CD14-positive monocyte (primary cell): ENCODE measurements at regions of chr11 and their contacts with region 1.

Region 1: GRCh38 chr11:112795142-112795815 is 165.9 kb upstream of the NCAM1 start:
- DNase-seq: peak; percentile 5 to 35 (median 16)
- H3K4me3 ChIP-seq: no peak overlapping the region
- H3K4me3 Mint-ChIP-seq: no peak overlapping the region
- H3K27ac ChIP-seq: no peak overlapping the region
- H3K27ac Mint-ChIP-seq: peak overlapping the region in 1 of 7 donors; percentile 58
- H3K4me1 ChIP-seq: no peaks in the 10 kb centered on the region
- H3K4me1 Mint-ChIP-seq: peaks cover 8% of the 10 kb centered on the region
- H3K27me3 ChIP-seq: no peaks in the 10 kb centered on the region
- H3K27me3 Mint-ChIP-seq: no peaks in the 10 kb centered on the region
- CTCF ChIP-seq: peak; percentile 46

Region 2: DNA sequence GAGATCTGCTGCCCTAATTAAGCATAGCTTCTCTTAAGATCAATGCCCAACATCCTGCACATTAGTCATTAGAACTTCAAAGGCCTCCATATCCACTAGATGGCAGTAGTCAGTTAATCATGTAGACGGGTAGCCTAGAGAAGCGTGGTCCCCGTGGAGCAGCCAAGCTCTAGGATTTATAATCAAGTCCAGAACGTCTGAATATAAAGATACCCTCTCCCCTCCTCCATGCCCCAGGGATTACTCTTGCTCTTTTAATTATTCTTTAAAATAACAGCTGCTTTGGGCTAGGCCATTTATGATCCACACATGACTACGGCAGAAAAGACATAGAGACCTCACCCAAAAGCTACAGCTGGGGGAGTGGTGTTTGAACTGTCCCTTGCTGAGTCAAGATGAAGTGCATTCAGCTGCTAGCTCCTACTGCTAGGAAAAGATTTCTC is 207.0 kb before region 1 on chr11:
- intact Hi-C with region 1: loop called (anchors 2 to 5 kb)
- DNase-seq: peak; percentile 57 to 79 (median 73)
- H3K4me3 ChIP-seq: no peak overlapping the region
- H3K4me3 Mint-ChIP-seq: peak overlapping the region in 1 of 2 donors; percentile 13
- H3K27ac ChIP-seq: no peak overlapping the region
- H3K27ac Mint-ChIP-seq: no peak overlapping the region
- H3K4me1 ChIP-seq: peaks cover 0 to 5% of the 10 kb centered on the region in 2 donors
- H3K4me1 Mint-ChIP-seq: peaks cover 14% of the 10 kb centered on the region
- H3K27me3 ChIP-seq: no peaks in the 10 kb centered on the region
- H3K27me3 Mint-ChIP-seq: peaks cover 1 to 5% (median 4%) of the 10 kb centered on the region in 3 donors
- CTCF ChIP-seq: peak; percentile 76